ENCODE measurements at regions of chr22 and their contacts with region 1.

Region 1: DNA sequence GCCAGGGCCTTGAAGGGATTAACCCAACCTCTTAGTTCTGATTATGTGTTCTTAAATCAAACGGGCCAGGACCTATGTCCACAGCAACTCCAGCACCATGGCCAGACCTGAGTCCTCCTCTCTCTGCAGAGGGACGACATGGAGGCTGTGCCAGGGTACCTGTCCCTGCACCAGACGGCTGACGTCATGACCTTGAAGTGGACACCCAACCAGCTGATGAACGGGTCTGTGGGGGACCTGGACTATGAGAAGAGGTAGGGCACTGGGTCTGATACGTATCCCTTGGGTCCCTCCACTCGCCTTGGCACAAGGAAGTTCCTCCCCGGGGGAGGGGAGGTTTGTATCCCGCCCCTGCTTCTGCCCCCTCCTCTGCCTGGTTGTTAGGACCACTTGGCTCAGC is 53.6 kb downstream of the SGSM1 start:
- DNase-seq: no peak
- H3K4me3 ChIP-seq: no peak overlapping the region
- H3K27ac ChIP-seq: no peak overlapping the region
- H3K4me1 ChIP-seq: no peaks in the 10 kb centered on the region
- H3K27me3 ChIP-seq: no peaks in the 10 kb centered on the region
- CTCF ChIP-seq: no peak
- EP300 ChIP-seq: no peak
- POLR2A ChIP-seq: no peak

Region 2: DNA sequence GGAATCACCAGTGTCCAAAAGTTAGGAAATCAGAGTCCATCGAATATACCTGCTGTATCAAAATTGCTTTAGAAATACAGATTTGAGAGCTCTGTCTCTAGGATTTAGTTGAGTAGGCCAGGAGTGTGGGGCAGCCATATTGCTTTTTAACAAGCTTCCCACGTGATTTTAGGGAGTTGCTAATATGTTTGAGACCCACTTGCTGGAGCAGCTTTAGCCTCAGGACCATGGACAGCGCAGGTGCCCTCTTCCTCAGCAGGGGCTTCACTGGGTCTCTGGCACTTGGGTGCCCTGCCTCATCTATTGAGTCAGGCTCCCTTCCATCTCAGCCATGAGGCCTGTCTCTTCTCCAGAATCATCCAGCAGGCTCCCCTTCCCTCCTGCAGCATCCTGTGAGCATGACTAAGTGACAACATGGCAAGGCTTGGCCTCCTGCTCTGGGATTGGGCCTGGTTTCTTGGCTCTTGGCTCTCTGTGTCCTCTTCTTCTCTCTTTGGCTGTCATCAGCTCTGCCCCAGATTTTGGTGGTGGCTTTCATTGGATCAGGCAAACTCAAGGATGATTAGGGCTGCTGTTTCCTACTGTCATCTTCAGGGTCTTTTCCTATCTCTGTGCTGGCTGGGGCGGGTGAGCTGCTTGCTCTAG is 16.4 kb after region 1 on chr22:
- in situ Hi-C with region 1: no loop called
- intact Hi-C with region 1: loop called (anchors 1 kb)
- DNase-seq: no peak
- H3K4me3 ChIP-seq: no peak overlapping the region
- H3K27ac ChIP-seq: no peak overlapping the region
- H3K4me1 ChIP-seq: no peaks in the 10 kb centered on the region
- H3K27me3 ChIP-seq: no peaks in the 10 kb centered on the region
- CTCF ChIP-seq: no peak
- EP300 ChIP-seq: no peak
- POLR2A ChIP-seq: no peak